Naive thymus-derived CD4-positive, alpha-beta T cell (primary cell): ENCODE measurements at regions of chr16 and their contacts with region 1.

Region 1: DNA sequence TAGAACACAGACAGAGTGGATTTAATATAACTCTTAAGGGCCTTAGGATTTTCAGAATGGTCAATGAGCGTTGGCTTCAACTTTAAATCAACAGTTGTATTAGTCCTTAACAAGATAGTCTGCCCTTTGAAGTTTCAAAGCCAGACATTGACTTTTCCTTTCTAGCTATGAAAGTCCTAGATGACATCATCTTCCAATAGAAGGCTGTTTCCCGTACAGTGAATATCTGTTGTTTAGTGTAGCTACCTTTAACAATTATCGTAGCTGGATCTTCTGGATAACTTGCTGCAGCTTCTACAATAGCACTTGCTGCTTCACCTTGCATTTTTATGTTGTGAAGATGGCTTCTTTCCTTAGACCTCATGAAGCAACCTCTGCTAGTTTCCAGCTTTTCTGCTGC is 125.3 kb upstream of the CNTNAP4 start:
- DNase-seq: no peak
- ATAC-seq: no peak
- H3K4me3 ChIP-seq: no peak overlapping the region
- H3K4me3 Mint-ChIP-seq: no peak overlapping the region
- H3K27ac ChIP-seq: no peak overlapping the region
- H3K27ac Mint-ChIP-seq: no peak overlapping the region
- H3K4me1 ChIP-seq: no peaks in the 10 kb centered on the region
- H3K4me1 Mint-ChIP-seq: no peaks in the 10 kb centered on the region
- H3K27me3 ChIP-seq: no peaks in the 10 kb centered on the region
- H3K27me3 Mint-ChIP-seq: no peaks in the 10 kb centered on the region

Region 2: GRCh38 chr16:76386784-76387183 is 234.9 kb after region 1 on chr16:
- CTCF ChIA-PET with region 1: no interaction called
- POLR2A ChIA-PET with region 1: no interaction called
- intact Hi-C with region 1: loop called in 1 of 2 experiments (anchors 10 kb)
- DNase-seq: no peak
- ATAC-seq: no peak
- H3K4me3 ChIP-seq: no peak overlapping the region
- H3K4me3 Mint-ChIP-seq: no peak overlapping the region
- H3K27ac ChIP-seq: no peak overlapping the region
- H3K27ac Mint-ChIP-seq: no peak overlapping the region
- H3K4me1 ChIP-seq: no peaks in the 10 kb centered on the region
- H3K4me1 Mint-ChIP-seq: no peaks in the 10 kb centered on the region
- H3K27me3 ChIP-seq: no peaks in the 10 kb centered on the region
- H3K27me3 Mint-ChIP-seq: no peaks in the 10 kb centered on the region